A673 (cell line): ENCODE measurements at regions of chr11 and their contacts with region 1.

Region 1: DNA sequence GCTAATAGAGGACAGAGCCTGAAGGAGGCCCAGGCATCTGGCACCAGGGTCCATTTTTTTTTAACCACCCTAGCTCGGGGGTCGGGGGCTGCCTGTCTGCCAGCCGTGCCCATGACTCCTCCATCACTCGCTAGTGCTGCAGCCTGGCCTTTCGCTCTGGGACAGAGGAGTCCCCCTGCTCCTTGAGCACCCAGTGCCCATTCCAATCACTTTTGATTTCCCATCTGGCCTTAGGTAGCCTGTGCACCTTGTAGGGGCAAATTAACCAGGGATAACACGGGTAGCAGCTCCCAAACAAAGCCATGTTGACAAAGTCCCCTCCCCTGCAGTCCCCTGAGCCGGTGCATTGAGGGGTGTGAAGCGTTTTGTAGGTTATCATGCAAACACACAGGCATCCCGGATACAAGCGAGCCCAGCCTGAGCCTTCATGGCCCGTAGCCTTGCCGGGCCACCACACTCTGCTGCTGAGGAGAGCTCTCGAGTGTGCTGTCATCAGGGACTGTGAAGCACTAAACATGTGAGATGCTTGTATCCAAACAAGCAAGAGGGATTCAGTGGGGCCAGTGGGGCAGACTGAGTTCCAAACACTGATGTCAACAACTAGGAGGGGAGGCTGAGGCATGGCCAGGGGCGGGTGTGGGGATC is 208.7 kb downstream of the DSCAML1 start:
- DNase-seq: no peak
- H3K4me3 ChIP-seq: no peak overlapping the region
- H3K27ac ChIP-seq: no peak overlapping the region
- H3K4me1 ChIP-seq: no peaks in the 10 kb centered on the region
- H3K27me3 ChIP-seq: peaks cover 20% of the 10 kb centered on the region
- CTCF ChIP-seq: no peak

Region 2: GRCh38 chr11:117127171-117127901 is 461.0 kb before region 1 on chr11:
- CTCF ChIA-PET with region 1: interaction called, 14 read pairs
- POLR2A ChIA-PET with region 1: no interaction called
- intact Hi-C with region 1: no loop called
- DNase-seq: no peak
- H3K4me3 ChIP-seq: no peak overlapping the region
- H3K27ac ChIP-seq: no peak overlapping the region
- H3K4me1 ChIP-seq: no peaks in the 10 kb centered on the region
- H3K27me3 ChIP-seq: no peaks in the 10 kb centered on the region
- CTCF ChIP-seq: no peak